ENCODE measurements at regions of chr19 and their contacts with region 1.

Region 1: GRCh38 chr19:43765109-43765876 is 10.5 kb upstream of the SMG9 start:
- DNase-seq: peak; percentile 92
- ATAC-seq: peak; percentile 81
- H3K4me3 Mint-ChIP-seq: peak overlapping the region; percentile 47
- H3K27ac Mint-ChIP-seq: peak overlapping the region; percentile 97
- H3K4me1 Mint-ChIP-seq: peaks cover 71% of the 10 kb centered on the region
- H3K27me3 Mint-ChIP-seq: no peaks in the 10 kb centered on the region

Region 2: GRCh38 chr19:43700395-43701000 is 64.8 kb before region 1 on chr19:
- CTCF ChIA-PET with region 1: interaction called, 8 read pairs
- POLR2A ChIA-PET with region 1: no interaction called
- intact Hi-C with region 1: loop called in 1 of 2 experiments (anchors 1 kb)
- DNase-seq: peak; percentile 47
- ATAC-seq: peak; percentile 26
- H3K4me3 Mint-ChIP-seq: peak overlapping the region; percentile 69
- H3K27ac Mint-ChIP-seq: peak overlapping the region; percentile 99
- H3K4me1 Mint-ChIP-seq: peaks cover 21% of the 10 kb centered on the region
- H3K27me3 Mint-ChIP-seq: peaks cover 18% of the 10 kb centered on the region

Region 3: GRCh38 chr19:43743022-43743421 is 22.3 kb before region 1 on chr19:
- CTCF ChIA-PET with region 1: interaction called, 17 read pairs
- POLR2A ChIA-PET with region 1: no interaction called
- intact Hi-C with region 1: loop called in 1 of 2 experiments (anchors 1 kb)
- DNase-seq: no peak
- ATAC-seq: no peak
- H3K4me3 Mint-ChIP-seq: no peak overlapping the region
- H3K27ac Mint-ChIP-seq: no peak overlapping the region
- H3K4me1 Mint-ChIP-seq: peaks cover 9% of the 10 kb centered on the region
- H3K27me3 Mint-ChIP-seq: no peaks in the 10 kb centered on the region

Region 4: GRCh38 chr19:43809762-43810696 is 44.7 kb after region 1 on chr19:
- CTCF ChIA-PET with region 1: interaction called, 5 read pairs
- POLR2A ChIA-PET with region 1: no interaction called
- intact Hi-C with region 1: loop called in 1 of 2 experiments (anchors 1 kb)
- DNase-seq: no peak
- ATAC-seq: peak; percentile 83
- H3K4me3 Mint-ChIP-seq: no peak overlapping the region
- H3K27ac Mint-ChIP-seq: no peak overlapping the region
- H3K4me1 Mint-ChIP-seq: no peaks in the 10 kb centered on the region
- H3K27me3 Mint-ChIP-seq: peaks cover 8% of the 10 kb centered on the region

Region 5: GRCh38 chr19:44176590-44176989 is 411.3 kb after region 1 on chr19:
- CTCF ChIA-PET with region 1: no interaction called
- POLR2A ChIA-PET with region 1: no interaction called
- intact Hi-C with region 1: no loop called
- DNase-seq: no peak
- ATAC-seq: no peak
- H3K4me3 Mint-ChIP-seq: no peak overlapping the region
- H3K27ac Mint-ChIP-seq: no peak overlapping the region
- H3K4me1 Mint-ChIP-seq: no peaks in the 10 kb centered on the region
- H3K27me3 Mint-ChIP-seq: no peaks in the 10 kb centered on the region

Region 6: GRCh38 chr19:44752816-44753618 is 987.7 kb after region 1 on chr19:
- CTCF ChIA-PET with region 1: no interaction called
- POLR2A ChIA-PET with region 1: no interaction called
- intact Hi-C with region 1: loop called in 1 of 2 experiments (anchors 5 kb)
- DNase-seq: peak; percentile 98
- ATAC-seq: peak; percentile 79
- H3K4me3 Mint-ChIP-seq: peak overlapping the region; percentile 94
- H3K27ac Mint-ChIP-seq: peak overlapping the region; percentile 97
- H3K4me1 Mint-ChIP-seq: peaks cover 54% of the 10 kb centered on the region
- H3K27me3 Mint-ChIP-seq: no peaks in the 10 kb centered on the region

Measured in activated CD4-positive, alpha-beta T cell treated with anti-CD3 and anti-CD28 coated beads for 36 hours (primary cell).